Activated B cell treated with CpG ODN at 0.5 μM for 24 hours (primary cell): ENCODE measurements at regions of chr17 and their contacts with region 1.

Region 1: GRCh38 chr17:50719144-50719923 is at the start of gene LUC7L3:
- DNase-seq: peak; percentile 97
- ATAC-seq: peak; percentile 92
- H3K4me3 Mint-ChIP-seq: peak within 1 kb of the TSS; percentile 97
- H3K27ac Mint-ChIP-seq: peak within 1 kb of the TSS; percentile 98
- H3K4me1 Mint-ChIP-seq: peaks cover 45% of the 10 kb centered on the region
- H3K27me3 Mint-ChIP-seq: no peaks in the 10 kb centered on the region
- CTCF ChIP-seq: no peak
- total RNA-seq, gene LUC7L3: 158 and 162 TPM in 2 replicates

Region 2: GRCh38 chr17:50425682-50426471 is 293.5 kb before region 1 on chr17 and contains the start of gene ACSF2:
- CTCF ChIA-PET with region 1: no interaction called
- POLR2A ChIA-PET with region 1: interaction called, 11 read pairs
- intact Hi-C with region 1: no loop called
- DNase-seq: peak; percentile 65
- ATAC-seq: peak; percentile 82
- H3K4me3 Mint-ChIP-seq: peak within 1 kb of the TSS; percentile 88
- H3K27ac Mint-ChIP-seq: peak within 1 kb of the TSS; percentile 83
- H3K4me1 Mint-ChIP-seq: peaks cover 44% of the 10 kb centered on the region
- H3K27me3 Mint-ChIP-seq: no peaks in the 10 kb centered on the region
- CTCF ChIP-seq: no peak
- total RNA-seq, gene ACSF2: 16.4 and 17.9 TPM in 2 replicates

Region 3: GRCh38 chr17:50763716-50764475 is 44.6 kb after region 1 on chr17:
- CTCF ChIA-PET with region 1: no interaction called
- POLR2A ChIA-PET with region 1: interaction called, 12 read pairs
- intact Hi-C with region 1: no loop called
- DNase-seq: no peak
- ATAC-seq: no peak
- H3K4me3 Mint-ChIP-seq: peak overlapping the region; percentile 97
- H3K27ac Mint-ChIP-seq: no peak overlapping the region
- H3K4me1 Mint-ChIP-seq: peaks cover 38% of the 10 kb centered on the region
- H3K27me3 Mint-ChIP-seq: no peaks in the 10 kb centered on the region
- CTCF ChIP-seq: no peak

Region 4: DNA sequence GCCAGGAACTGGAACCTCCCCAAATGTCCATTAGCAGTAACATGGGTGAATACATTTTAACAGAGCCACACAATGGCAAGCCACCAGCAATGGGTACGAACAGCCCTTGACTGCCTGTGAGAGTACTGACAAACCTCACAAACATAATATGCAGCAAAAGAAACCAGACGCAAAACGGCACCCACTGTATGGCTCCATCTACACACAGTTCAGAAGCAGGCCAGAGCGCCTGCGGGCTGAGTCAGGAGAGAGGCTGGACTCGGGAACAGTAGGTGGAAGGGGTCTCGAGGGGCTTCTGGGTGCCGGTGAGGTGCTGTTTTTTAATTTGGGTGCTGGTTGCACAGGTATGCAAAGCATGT is 224.2 kb after region 1 on chr17:
- CTCF ChIA-PET with region 1: no interaction called
- POLR2A ChIA-PET with region 1: interaction called, 10 read pairs
- intact Hi-C with region 1: no loop called
- DNase-seq: no peak
- ATAC-seq: no peak
- H3K4me3 Mint-ChIP-seq: no peak overlapping the region
- H3K27ac Mint-ChIP-seq: no peak overlapping the region
- H3K4me1 Mint-ChIP-seq: peaks cover 9% of the 10 kb centered on the region
- H3K27me3 Mint-ChIP-seq: peaks cover 5% of the 10 kb centered on the region
- CTCF ChIP-seq: no peak